ENCODE measurements at regions of chr19 and their contacts with region 1.

Region 1: DNA sequence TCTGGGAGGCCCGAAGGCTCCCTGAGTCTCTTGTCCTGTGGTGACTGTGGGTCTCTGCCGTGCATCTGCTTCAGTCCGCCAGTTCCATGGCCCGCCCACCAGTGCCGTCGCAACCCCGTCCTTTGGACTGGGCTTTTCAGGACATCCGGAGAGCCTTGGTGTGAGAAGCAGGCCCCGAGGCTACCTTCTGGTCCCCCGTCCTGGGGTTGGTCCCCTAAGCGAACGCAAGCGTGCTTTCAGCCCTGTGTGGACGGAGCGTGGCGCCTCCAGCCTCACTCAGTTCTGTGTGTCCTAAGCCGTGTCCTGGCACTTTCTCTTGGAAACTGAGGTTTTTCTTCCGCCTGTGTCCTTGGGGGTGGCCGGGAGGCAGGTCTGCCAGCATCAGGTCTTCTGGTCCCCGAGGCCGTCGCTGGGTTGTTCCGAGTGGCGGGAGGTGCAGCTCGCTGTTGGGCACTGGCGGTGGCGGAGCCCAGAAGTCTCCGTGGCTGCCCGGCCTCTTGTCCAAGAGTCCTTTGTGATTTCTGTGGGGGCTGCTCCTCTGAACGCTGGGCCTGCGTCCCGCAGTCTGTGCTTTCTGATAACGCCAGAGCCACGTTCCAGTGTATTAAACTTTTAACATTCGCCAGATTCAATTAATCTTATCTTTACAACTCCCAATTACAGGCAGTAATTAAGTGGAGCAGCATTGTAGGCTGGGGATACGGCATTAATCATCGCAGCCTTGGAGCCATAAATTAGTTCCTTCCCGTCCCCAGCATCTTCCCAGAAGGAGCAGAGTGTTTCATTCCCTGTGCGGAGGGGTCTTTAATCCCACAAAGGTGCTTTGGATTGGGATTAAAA is 99.5 kb downstream of the KDM4B start:
- DNase-seq: no peak
- ATAC-seq: peak in 1 of 2 donors; percentile 17

Region 2: GRCh38 chr19:5470264-5470671 is 401.8 kb after region 1 on chr19:
- intact Hi-C with region 1: loop called in 1 of 2 experiments (anchors 10 kb)
- DNase-seq: no peak
- ATAC-seq: no peak